T-cell (primary cell): ENCODE measurements at regions of chr19 and their contacts with region 1.

Region 1: DNA sequence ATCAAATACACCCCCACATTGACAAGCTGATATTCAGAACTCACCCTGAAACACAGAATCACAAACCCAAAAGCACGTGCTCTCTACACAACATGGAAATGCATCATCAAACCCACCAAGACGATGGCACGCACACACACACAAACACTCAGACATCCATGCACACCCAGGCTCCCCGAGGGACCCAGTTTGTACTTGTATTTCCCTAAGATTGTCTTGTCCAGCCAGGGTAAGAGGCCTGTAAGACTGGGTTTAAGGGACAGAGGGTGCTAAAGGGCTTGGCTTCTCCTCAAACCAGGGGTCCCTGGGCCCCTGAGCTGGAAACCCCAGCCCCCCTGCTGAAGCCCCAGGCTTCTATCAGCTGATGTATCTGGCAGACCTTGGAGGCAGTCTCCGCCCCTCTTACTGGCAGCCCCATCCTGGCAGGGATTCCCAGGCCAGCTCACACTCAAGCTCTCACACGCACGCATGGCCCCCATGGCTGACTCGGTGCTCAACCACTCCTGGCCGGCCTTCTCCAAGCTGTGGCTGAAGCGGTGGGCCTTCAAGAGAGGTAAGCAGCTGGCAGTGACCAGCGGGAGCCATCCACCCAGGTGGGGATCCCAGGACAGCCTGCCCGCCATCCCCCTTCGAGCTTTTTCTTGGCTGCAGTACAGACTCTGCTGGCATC is 6.5 kb downstream of the ARHGEF18 start:
- DNase-seq: no peak
- ATAC-seq: no peak
- H3K4me3 ChIP-seq: no peak overlapping the region
- H3K4me3 Mint-ChIP-seq: peak overlapping the region in 1 of 3 donors; percentile 100
- H3K27ac ChIP-seq: no peak overlapping the region
- H3K27ac Mint-ChIP-seq: peak overlapping the region; percentile 85
- H3K4me1 ChIP-seq: peaks cover 4 to 64% of the 10 kb centered on the region in 2 experiments
- H3K4me1 Mint-ChIP-seq: peaks cover 86 to 91% (median 87%) of the 10 kb centered on the region in 3 donors
- H3K27me3 ChIP-seq: no peaks in the 10 kb centered on the region
- H3K27me3 Mint-ChIP-seq: no peaks in the 10 kb centered on the region

Region 2: DNA sequence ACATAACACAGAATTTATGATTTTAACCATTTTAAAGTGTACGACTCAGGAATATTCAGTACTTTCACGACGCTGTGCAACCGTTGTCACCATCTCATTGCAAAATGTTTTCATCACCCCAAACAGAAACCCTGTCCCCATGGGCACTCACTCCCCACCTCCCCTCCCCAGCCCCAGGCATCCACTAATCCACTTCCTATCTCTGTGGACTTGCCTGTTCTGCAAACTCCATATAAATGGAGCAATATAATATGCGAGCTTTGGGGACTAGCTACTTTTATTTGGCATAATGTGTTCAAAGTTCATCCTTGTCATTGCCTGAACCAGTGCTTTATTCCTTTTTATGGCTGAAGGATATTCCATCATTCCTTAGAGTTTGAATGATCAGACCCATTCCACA is 53.8 kb before region 1 on chr19:
- CTCF ChIA-PET with region 1: no interaction called
- POLR2A ChIA-PET with region 1: no interaction called
- DNase-seq: no peak
- ATAC-seq: no peak
- H3K4me3 ChIP-seq: no peak overlapping the region
- H3K4me3 Mint-ChIP-seq: no peak overlapping the region
- H3K27ac ChIP-seq: no peak overlapping the region
- H3K27ac Mint-ChIP-seq: no peak overlapping the region
- H3K4me1 ChIP-seq: no peaks in the 10 kb centered on the region
- H3K4me1 Mint-ChIP-seq: peaks cover 0 to 5% (median 0%) of the 10 kb centered on the region in 3 donors
- H3K27me3 ChIP-seq: peaks cover 0 to 25% of the 10 kb centered on the region in 2 experiments
- H3K27me3 Mint-ChIP-seq: peaks cover 9 to 21% of the 10 kb centered on the region in 2 donors

Region 3: DNA sequence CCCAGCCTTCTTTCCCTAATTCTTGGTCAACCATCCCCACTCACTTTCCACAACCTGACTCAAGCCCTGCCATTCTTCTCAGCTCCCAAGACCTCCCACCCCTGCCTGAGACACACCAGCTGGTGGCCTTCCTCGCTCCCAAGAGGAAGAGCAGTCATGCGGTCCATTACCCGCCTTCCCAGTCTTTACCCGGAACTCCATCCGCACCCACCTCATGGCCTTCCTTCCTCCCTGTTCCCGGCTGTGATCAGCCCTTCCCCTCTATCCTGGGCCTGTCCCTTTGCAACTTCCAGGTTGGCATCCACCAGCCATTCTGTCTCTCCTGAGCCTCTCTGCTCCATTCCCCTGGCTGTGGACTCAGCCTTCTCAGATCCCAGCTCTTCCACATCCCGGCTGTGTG is 42.5 kb before region 1 on chr19:
- CTCF ChIA-PET with region 1: no interaction called
- POLR2A ChIA-PET with region 1: no interaction called
- DNase-seq: no peak
- ATAC-seq: no peak
- H3K4me3 ChIP-seq: no peak overlapping the region
- H3K4me3 Mint-ChIP-seq: no peak overlapping the region
- H3K27ac ChIP-seq: no peak overlapping the region
- H3K27ac Mint-ChIP-seq: no peak overlapping the region
- H3K4me1 ChIP-seq: no peaks in the 10 kb centered on the region
- H3K4me1 Mint-ChIP-seq: no peaks in the 10 kb centered on the region
- H3K27me3 ChIP-seq: no peaks in the 10 kb centered on the region
- H3K27me3 Mint-ChIP-seq: no peaks in the 10 kb centered on the region

Region 4: DNA sequence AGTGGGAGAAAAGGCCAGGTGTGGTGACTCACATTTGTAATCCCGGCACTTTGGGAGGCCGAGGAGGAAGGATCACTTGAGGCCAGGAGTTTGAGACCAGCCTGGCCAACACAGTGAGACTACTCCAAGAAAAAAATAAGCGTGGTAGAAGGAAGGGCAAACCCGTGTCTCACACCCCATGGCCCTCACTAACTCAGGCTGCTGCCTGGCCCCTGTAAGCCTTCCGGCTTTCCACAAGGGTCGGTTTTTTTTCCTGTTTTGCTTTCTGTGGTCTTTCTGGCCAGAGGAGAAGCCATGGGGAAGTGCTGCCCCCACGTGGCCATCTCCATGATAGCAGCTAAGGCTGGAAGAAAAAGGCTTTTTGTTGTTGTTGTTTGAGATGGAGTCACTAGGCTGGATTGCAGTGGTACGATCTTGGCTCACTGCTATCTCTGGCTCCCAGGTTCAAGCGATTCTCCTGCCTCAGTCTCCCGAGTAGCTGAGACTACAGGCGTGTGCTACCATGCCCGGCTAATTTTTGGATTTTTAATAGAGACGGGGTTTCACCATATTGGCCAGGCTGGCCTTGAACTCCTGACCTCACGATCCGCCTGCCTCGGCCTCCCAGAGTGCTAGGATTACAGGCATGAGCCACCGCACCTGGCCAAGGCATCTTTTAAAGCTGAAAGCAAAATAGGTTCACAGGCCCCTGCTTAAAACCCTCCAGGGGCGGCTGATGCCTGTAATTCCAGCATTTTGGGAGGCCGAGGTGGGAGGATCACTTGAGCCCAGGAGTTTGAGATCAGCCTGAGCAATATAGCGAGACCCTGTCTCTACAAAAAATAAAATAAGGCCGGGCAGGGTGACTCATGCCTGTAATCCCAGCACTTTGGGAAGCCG is 14.1 kb before region 1 on chr19:
- CTCF ChIA-PET with region 1: interaction called, 3 to 13 read pairs
- POLR2A ChIA-PET with region 1: interaction called in 1 of 2 experiments, 3 read pairs
- DNase-seq: peak; percentile 43 to 92 (median 78)
- ATAC-seq: peak in 3 of 4 experiments; percentile 4 to 48 (median 15)
- H3K4me3 ChIP-seq: no peak overlapping the region
- H3K4me3 Mint-ChIP-seq: peak overlapping the region in 1 of 3 donors; percentile 44
- H3K27ac ChIP-seq: peak overlapping the region; percentile 15
- H3K27ac Mint-ChIP-seq: peak overlapping the region; percentile 84 to 86
- H3K4me1 ChIP-seq: peaks cover 10 to 68% of the 10 kb centered on the region in 2 experiments
- H3K4me1 Mint-ChIP-seq: peaks cover 47 to 67% (median 64%) of the 10 kb centered on the region in 3 donors
- H3K27me3 ChIP-seq: no peaks in the 10 kb centered on the region
- H3K27me3 Mint-ChIP-seq: no peaks in the 10 kb centered on the region

Region 5: DNA sequence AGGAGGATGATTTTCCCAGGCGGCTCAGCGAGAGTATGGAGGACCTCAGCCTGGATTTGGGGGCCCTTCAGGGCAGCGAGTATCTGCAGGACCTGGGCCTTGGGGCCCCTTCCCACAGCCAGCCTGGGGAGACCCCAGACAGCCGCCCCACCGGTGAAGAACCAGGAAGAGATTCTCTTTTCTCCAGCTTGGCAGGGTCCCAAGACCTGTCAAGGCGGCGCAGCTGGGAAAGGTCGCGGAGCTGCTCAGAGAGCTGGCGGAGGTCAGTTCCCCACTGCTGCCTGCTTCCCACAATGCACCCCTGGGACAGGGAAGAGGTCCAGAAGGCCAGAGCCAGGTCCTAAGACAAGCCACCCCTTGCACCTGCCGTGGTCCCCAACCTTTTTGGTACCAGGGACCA is 17.5 kb after region 1 on chr19:
- CTCF ChIA-PET with region 1: no interaction called
- POLR2A ChIA-PET with region 1: no interaction called
- DNase-seq: no peak
- ATAC-seq: no peak
- H3K4me3 ChIP-seq: no peak overlapping the region
- H3K4me3 Mint-ChIP-seq: no peak overlapping the region
- H3K27ac ChIP-seq: no peak overlapping the region
- H3K27ac Mint-ChIP-seq: no peak overlapping the region
- H3K4me1 ChIP-seq: peaks cover 0 to 5% of the 10 kb centered on the region in 2 experiments
- H3K4me1 Mint-ChIP-seq: peaks cover 0 to 10% (median 6%) of the 10 kb centered on the region in 3 donors
- H3K27me3 ChIP-seq: peaks cover 0 to 3% of the 10 kb centered on the region in 2 experiments
- H3K27me3 Mint-ChIP-seq: no peaks in the 10 kb centered on the region

Region 6: GRCh38 chr19:7705387-7706187 is 350.3 kb after region 1 on chr19:
- CTCF ChIA-PET with region 1: no interaction called
- POLR2A ChIA-PET with region 1: no interaction called
- DNase-seq: peak; percentile 57 to 88 (median 78)
- ATAC-seq: peak; percentile 96 to 98 (median 96)
- H3K4me3 ChIP-seq: peak overlapping the region; percentile 30 to 31
- H3K4me3 Mint-ChIP-seq: peak overlapping the region; percentile 69 to 78 (median 76)
- H3K27ac ChIP-seq: peak overlapping the region; percentile 88
- H3K27ac Mint-ChIP-seq: peak overlapping the region; percentile 96 to 98
- H3K4me1 ChIP-seq: peaks cover 14 to 50% of the 10 kb centered on the region in 2 experiments
- H3K4me1 Mint-ChIP-seq: peaks cover 45 to 62% (median 60%) of the 10 kb centered on the region in 3 donors
- H3K27me3 ChIP-seq: peaks cover 0 to 9% of the 10 kb centered on the region in 2 experiments
- H3K27me3 Mint-ChIP-seq: no peaks in the 10 kb centered on the region